Dendritic cell treated with granulocyte-macrophage colony-stimulating factor and Interleukin-4, amounts not matched to agents 40 ng/mL and 50 ng/mL, for 4 days (primary cell): ENCODE measurements at regions of chr11 and their contacts with region 1.

Region 1: DNA sequence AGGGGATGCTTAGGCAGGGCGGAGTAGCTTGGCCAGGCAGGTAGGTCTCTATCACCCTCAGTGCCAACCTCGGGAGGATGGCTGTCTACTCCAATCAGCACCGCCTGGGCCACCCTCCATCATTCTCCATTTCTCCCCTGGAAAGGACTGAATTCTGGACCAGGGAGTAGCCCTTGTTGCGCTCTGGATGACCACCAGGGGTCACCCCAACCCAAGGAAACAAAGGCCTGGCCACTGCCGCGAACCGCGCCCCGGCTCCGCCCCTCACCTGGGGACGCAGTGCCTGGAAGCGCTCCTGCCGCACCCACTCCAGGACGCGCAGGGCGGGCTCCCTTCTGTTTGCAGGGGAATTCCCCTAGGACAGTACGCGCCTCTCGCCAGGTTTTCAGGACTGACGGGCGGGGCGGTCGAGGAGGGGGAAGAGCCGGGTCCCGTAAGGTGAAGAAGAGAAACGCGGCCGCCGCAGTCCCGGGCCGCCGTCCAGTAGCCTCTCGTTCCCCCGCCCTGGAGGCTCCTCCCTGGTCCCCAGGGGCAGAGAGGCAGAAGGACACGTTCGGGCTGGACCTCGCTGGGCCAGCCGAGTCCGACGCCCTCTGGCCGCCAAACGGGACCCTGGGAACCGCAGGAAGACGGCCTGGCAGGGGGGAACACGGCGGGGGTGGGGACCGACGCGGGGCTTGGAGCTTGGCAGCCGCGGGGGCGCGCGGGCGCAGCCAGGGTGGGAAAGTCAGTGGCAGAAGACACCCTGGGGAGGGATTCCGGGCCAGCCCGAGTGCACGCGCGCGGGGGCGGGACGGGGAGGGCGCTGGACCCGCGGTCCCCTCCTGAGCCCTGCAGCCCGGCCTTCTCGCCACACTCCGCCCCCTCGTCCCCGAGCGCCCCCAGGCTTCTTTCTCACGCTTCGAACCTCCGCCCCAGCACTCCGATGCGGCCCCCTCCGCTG is 7.1 kb downstream of the SCN4B start:
- H3K4me3 Mint-ChIP-seq: peak overlapping the region; percentile 78
- H3K27ac Mint-ChIP-seq: peak overlapping the region; percentile 43
- H3K4me1 Mint-ChIP-seq: peaks cover 47% of the 10 kb centered on the region
- H3K27me3 Mint-ChIP-seq: peaks cover 30% of the 10 kb centered on the region

Region 2: GRCh38 chr11:117817368-117818040 is 328.1 kb before region 1 on chr11:
- intact Hi-C with region 1: loop called (anchors 10 kb)
- H3K4me3 Mint-ChIP-seq: peak overlapping the region; percentile 58
- H3K27ac Mint-ChIP-seq: peak overlapping the region; percentile 97
- H3K4me1 Mint-ChIP-seq: peaks cover 84% of the 10 kb centered on the region
- H3K27me3 Mint-ChIP-seq: no peaks in the 10 kb centered on the region

Region 3: GRCh38 chr11:118180300-118180703 is 34.7 kb after region 1 on chr11:
- intact Hi-C with region 1: loop called (anchors 5 kb)
- H3K4me3 Mint-ChIP-seq: no peak overlapping the region
- H3K27ac Mint-ChIP-seq: no peak overlapping the region
- H3K4me1 Mint-ChIP-seq: peaks cover 65% of the 10 kb centered on the region
- H3K27me3 Mint-ChIP-seq: peaks cover 48% of the 10 kb centered on the region

Region 4: DNA sequence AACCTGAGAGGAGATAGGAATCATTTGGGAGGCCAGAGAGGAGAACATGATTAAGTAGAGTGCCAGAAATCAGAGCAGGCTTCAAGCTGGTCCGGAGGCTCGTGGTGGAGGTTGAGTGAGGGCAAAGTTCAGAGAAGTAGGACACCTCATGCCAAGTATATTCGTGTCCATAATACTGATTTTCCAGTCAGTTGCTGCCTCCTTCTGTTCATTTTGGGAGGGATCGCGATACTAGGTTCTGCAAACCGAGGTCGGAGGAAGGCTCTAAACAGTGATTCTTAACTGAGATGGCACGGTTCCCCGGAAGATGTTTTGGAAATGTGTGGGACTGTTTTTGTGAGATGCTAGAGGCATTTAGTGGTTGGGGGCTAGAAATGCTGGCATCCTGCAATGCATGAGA is 145.4 kb after region 1 on chr11:
- intact Hi-C with region 1: loop called (anchors 1 kb)
- H3K4me3 Mint-ChIP-seq: no peak overlapping the region
- H3K27ac Mint-ChIP-seq: peak overlapping the region; percentile 21
- H3K4me1 Mint-ChIP-seq: peaks cover 37% of the 10 kb centered on the region
- H3K27me3 Mint-ChIP-seq: no peaks in the 10 kb centered on the region

Region 5: GRCh38 chr11:118338637-118339061 is 193.1 kb after region 1 on chr11:
- intact Hi-C with region 1: no loop called
- H3K4me3 Mint-ChIP-seq: no peak overlapping the region
- H3K27ac Mint-ChIP-seq: peak overlapping the region; percentile 28
- H3K4me1 Mint-ChIP-seq: peaks cover 6% of the 10 kb centered on the region
- H3K27me3 Mint-ChIP-seq: peaks cover 4% of the 10 kb centered on the region

Region 6: GRCh38 chr11:118359295-118359958 is 213.9 kb after region 1 on chr11 and contains the start of gene UBE4A:
- intact Hi-C with region 1: loop called (anchors 2 kb)
- H3K4me3 Mint-ChIP-seq: peak within 1 kb of the TSS; percentile 93
- H3K27ac Mint-ChIP-seq: peak within 1 kb of the TSS; percentile 93
- H3K4me1 Mint-ChIP-seq: peaks cover 47% of the 10 kb centered on the region
- H3K27me3 Mint-ChIP-seq: peaks cover 5% of the 10 kb centered on the region